ENCODE measurements at regions of chr7 and their contacts with region 1.

Region 1: DNA sequence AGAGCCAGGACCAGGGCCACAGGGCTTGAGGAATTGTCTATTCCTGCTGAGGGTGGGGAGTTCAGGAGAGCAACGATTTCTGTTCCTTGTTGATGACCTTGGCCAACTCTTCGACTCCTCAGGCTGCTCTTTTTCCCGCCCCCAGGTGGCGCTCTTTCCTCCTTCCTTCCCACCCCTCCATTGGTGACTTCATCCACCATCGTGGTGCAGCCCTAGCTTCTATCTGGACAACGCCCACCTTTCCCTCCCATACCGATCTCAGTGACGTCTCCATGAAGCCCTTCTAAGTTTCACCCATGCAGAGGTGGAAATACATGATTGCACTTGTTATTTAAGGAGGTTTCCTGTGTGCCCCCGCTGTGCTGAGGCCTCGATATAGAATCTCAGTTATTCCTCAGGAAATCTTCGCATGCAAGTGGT is 22.1 kb upstream of the CARD11 start:
- DNase-seq: peak; percentile 83
- ATAC-seq: peak; percentile 50
- H3K4me3 Mint-ChIP-seq: peak overlapping the region; percentile 65
- H3K27ac Mint-ChIP-seq: peak overlapping the region; percentile 89
- H3K4me1 Mint-ChIP-seq: peaks cover 87% of the 10 kb centered on the region
- H3K27me3 Mint-ChIP-seq: no peaks in the 10 kb centered on the region

Region 2: DNA sequence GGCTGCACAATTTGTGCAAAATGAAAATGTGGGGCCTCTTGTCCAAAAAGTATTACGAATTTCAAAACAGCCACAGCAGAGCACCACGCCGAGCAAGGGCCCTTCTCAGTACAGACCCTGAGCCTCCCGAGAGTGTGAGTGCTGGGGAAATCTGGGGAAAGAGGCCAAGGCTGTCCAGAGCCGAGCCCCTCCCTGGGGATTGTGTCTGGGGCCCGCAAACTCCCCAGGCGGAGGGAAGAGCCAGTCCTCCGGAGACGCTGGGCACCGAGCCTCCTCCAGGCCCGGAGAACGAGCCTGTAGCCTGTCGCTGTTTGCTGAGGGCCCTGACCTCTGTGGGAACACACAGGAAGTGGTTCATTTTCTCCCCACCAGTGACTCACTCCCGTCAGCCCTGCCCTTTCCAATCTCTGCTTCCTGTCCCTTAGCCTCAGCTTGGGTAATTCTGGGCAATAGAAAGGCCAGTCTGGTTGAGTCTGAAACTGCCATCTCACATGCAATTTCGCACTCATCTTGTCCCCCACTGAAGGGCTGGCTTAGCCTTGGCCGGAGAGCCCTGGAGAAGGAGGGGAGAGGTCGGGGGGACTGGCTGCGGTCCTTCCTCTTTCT is 202.2 kb before region 1 on chr7:
- CTCF ChIA-PET with region 1: interaction called, 12 read pairs
- POLR2A ChIA-PET with region 1: no interaction called
- DNase-seq: peak; percentile 90
- ATAC-seq: peak; percentile 91
- H3K4me3 Mint-ChIP-seq: peak overlapping the region; percentile 64
- H3K27ac Mint-ChIP-seq: peak overlapping the region; percentile 86
- H3K4me1 Mint-ChIP-seq: peaks cover 28% of the 10 kb centered on the region
- H3K27me3 Mint-ChIP-seq: peaks cover 12% of the 10 kb centered on the region

Region 3: DNA sequence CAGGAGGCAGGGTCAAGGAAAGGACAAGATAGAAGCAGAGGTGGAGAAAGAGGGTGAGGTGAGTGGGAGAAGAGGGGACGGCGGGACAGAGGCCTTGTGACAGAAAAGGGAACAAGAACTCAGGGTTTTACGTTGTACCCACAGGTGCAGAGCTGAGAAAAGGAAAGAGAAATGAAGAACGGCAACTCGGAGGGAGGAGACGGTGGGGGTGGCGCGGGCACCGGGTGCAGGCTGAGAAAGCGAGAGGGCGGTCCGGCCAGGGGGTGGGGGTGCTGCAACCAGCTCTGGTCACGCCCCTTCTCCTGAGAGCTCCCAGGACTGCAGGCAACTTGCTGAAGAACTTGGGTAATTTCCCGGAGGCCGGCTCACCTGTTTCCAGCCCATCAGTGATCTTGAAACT is 87.3 kb before region 1 on chr7:
- CTCF ChIA-PET with region 1: interaction called, 14 read pairs
- POLR2A ChIA-PET with region 1: no interaction called
- DNase-seq: peak; percentile 83
- ATAC-seq: peak; percentile 69
- H3K4me3 Mint-ChIP-seq: peak overlapping the region; percentile 67
- H3K27ac Mint-ChIP-seq: peak overlapping the region; percentile 97
- H3K4me1 Mint-ChIP-seq: peaks cover 80% of the 10 kb centered on the region
- H3K27me3 Mint-ChIP-seq: no peaks in the 10 kb centered on the region

Region 4: DNA sequence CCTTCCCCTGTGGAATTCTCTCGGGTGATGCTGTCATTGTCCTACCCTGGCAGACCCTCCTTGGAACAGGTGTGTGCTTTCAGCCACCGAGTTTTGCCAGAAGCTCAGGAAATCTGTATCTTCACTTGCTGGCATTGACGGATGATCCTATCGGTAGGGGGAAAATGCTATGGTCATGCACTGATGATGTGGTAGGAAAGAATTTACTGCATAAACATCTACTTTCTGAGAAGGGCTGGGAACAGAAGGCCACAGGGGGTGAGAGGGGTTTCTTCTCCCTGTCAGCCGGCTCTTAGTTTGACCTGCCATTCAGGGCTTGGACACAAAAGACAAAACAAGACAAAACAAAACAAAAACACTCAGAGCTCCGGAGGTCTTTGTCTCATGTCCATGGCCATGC is 21.5 kb after region 1 on chr7:
- CTCF ChIA-PET with region 1: interaction called, 169 read pairs
- POLR2A ChIA-PET with region 1: interaction called, 11 read pairs
- DNase-seq: no peak
- ATAC-seq: no peak
- H3K4me3 Mint-ChIP-seq: no peak overlapping the region
- H3K27ac Mint-ChIP-seq: no peak overlapping the region
- H3K4me1 Mint-ChIP-seq: peaks cover 42% of the 10 kb centered on the region
- H3K27me3 Mint-ChIP-seq: no peaks in the 10 kb centered on the region

Region 5: GRCh38 chr7:3103614-3104398 is 38.1 kb after region 1 on chr7:
- CTCF ChIA-PET with region 1: interaction called, 60 read pairs
- POLR2A ChIA-PET with region 1: interaction called, 6 read pairs
- DNase-seq: peak; percentile 48
- ATAC-seq: peak; percentile 6
- H3K4me3 Mint-ChIP-seq: no peak overlapping the region
- H3K27ac Mint-ChIP-seq: peak overlapping the region; percentile 91
- H3K4me1 Mint-ChIP-seq: peaks cover 81% of the 10 kb centered on the region
- H3K27me3 Mint-ChIP-seq: no peaks in the 10 kb centered on the region

Region 6: DNA sequence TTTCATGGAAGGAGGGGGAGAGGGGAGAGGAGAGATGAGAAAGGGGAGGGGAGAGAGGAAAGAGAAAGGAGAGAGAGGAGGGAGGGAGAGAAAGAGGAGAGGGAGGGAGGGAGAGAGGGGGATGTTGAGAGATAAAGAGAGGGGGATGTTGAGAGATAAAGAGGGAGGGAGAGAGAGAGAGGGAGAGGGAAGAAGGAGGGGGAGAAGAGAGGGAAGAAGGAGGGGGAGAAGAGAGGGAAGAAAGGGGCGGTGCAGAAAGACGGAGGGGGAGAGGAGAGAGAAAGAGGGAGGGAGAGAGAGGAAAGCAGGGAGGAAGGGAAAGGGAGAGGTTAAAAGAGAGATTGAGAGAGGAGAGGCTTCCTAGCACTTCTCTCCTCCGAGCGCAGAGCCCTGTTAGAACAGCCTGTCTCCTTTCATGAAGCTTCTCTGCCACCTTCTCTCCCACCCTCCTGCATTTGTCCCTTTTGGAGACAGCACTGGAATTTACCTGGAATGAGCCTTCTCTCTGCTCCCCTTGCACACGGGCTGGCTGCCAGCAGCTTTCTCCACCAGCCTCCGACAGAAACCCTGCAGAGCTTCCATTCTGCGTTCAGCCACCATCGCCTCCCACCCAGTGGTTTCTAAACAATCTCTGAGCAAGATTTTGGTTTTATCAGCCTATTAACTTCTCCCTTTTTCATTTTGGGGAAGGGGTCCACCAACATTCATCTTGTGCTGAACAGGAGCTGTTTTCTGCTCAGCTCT is 51.9 kb after region 1 on chr7:
- CTCF ChIA-PET with region 1: interaction called, 66 read pairs
- POLR2A ChIA-PET with region 1: interaction called, 4 read pairs
- DNase-seq: peak; percentile 69
- ATAC-seq: peak; percentile 64
- H3K4me3 Mint-ChIP-seq: peak overlapping the region; percentile 85
- H3K27ac Mint-ChIP-seq: peak overlapping the region; percentile 95
- H3K4me1 Mint-ChIP-seq: peaks cover 88% of the 10 kb centered on the region
- H3K27me3 Mint-ChIP-seq: no peaks in the 10 kb centered on the region

Region 7: GRCh38 chr7:3154912-3155494 is 89.3 kb after region 1 on chr7:
- CTCF ChIA-PET with region 1: interaction called, 75 read pairs
- POLR2A ChIA-PET with region 1: no interaction called
- DNase-seq: peak; percentile 80
- ATAC-seq: no peak
- H3K4me3 Mint-ChIP-seq: no peak overlapping the region
- H3K27ac Mint-ChIP-seq: peak overlapping the region; percentile 24
- H3K4me1 Mint-ChIP-seq: peaks cover 26% of the 10 kb centered on the region
- H3K27me3 Mint-ChIP-seq: peaks cover 9% of the 10 kb centered on the region

Region 8: GRCh38 chr7:3179456-3179855 is 113.7 kb after region 1 on chr7:
- CTCF ChIA-PET with region 1: no interaction called
- POLR2A ChIA-PET with region 1: no interaction called
- DNase-seq: no peak
- ATAC-seq: no peak
- H3K4me3 Mint-ChIP-seq: no peak overlapping the region
- H3K27ac Mint-ChIP-seq: no peak overlapping the region
- H3K4me1 Mint-ChIP-seq: no peaks in the 10 kb centered on the region
- H3K27me3 Mint-ChIP-seq: peaks cover 12% of the 10 kb centered on the region

Measured in activated CD8-positive, alpha-beta T cell treated with anti-CD3 and anti-CD28 coated beads, Interleukin-2, amount 10 ng/mL, durations not matched to agents 7 days and 5 days (primary cell).